ENCODE measurements at regions of chr16 and their contacts with region 1.

Region 1: DNA sequence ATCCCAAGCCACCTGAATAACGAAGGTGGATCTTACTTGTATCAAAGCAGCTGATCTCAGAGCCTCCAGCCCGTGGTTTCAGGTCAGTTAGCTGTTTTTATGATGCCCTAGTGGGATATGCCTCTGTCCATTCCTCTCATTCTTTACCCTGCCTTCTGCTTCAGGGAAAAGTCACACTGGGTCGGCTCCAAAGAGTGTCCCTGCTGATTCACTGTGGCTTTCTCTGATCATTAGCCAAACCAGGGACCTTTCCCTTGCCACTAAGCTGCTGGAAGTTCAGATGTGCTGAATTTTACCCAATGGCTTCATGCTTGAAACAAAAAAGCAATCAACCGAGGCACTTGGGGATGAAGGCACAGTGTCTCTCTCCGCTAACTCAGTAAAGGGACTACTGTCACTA is 170.2 kb upstream of the SALL1 start:
- DNase-seq: no peak
- ATAC-seq: no peak
- H3K4me3 ChIP-seq: no peak overlapping the region
- H3K27ac ChIP-seq: no peak overlapping the region
- H3K4me1 ChIP-seq: no peaks in the 10 kb centered on the region
- H3K27me3 ChIP-seq: no peaks in the 10 kb centered on the region
- CTCF ChIP-seq: no peak

Region 2: GRCh38 chr16:51271156-51271701 is 50.0 kb before region 1 on chr16:
- intact Hi-C with region 1: loop called in 1 of 2 experiments (anchors 5 kb)
- DNase-seq: no peak
- ATAC-seq: no peak
- H3K4me3 ChIP-seq: no peak overlapping the region
- H3K27ac ChIP-seq: no peak overlapping the region
- H3K4me1 ChIP-seq: no peaks in the 10 kb centered on the region
- H3K27me3 ChIP-seq: peaks cover 0 to 2% (median 0%) of the 10 kb centered on the region in 3 donors
- CTCF ChIP-seq: no peak

Region 3: DNA sequence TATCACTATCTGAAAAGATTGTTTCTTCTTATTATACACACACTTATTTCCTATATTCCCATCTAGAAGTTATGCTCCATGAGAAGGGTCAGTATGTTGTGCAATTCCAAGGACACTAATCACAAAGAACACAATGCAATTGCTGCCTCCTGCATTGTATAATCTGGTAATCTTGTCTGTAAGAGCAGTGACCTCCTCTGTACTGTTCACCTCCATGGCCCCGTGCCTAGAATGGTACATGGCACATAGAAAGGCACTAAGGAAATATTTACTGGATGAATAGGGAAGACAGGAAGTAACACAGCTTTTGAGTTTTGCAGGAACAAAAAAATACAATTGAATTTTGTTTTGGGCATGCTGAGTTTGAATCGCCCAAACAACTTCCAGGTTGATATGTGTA is 44.5 kb after region 1 on chr16:
- intact Hi-C with region 1: no loop called
- DNase-seq: no peak
- ATAC-seq: no peak
- H3K4me3 ChIP-seq: no peak overlapping the region
- H3K27ac ChIP-seq: no peak overlapping the region
- H3K4me1 ChIP-seq: no peaks in the 10 kb centered on the region
- H3K27me3 ChIP-seq: no peaks in the 10 kb centered on the region
- CTCF ChIP-seq: no peak

Region 4: DNA sequence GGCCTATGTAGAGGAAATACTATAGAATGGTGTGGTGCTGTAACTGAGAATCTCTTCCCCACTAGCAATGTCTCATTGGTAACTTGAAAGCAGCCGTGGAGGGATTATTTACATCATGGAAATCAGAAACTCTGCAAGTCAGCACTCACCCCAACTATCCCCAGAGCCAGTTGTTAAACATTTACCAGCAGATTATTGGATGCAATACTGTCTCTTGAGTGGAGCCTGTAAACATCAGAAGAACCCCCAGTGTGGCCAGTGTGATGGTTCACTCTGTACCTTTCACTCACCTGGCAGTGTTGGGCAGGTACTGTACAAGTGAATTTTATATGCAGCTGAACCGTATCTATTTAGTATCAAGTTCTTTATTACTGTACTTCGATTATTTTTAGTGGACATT is 129.7 kb after region 1 on chr16:
- intact Hi-C with region 1: no loop called
- DNase-seq: no peak
- ATAC-seq: no peak
- H3K4me3 ChIP-seq: no peak overlapping the region
- H3K27ac ChIP-seq: no peak overlapping the region
- H3K4me1 ChIP-seq: no peaks in the 10 kb centered on the region
- H3K27me3 ChIP-seq: no peaks in the 10 kb centered on the region
- CTCF ChIP-seq: no peak